Left lung (tissue), 14 donors: ENCODE measurements at regions of chr3 and their contacts with region 1.

Region 1: GRCh38 chr3:183385698-183386613 is 42.5 kb downstream of the MCF2L2 start:
- DNase-seq: peak in 2 of 4 donors; percentile 48 to 66
- ATAC-seq: peak; percentile 89
- H3K4me3 ChIP-seq: no peak overlapping the region
- H3K27ac ChIP-seq: no peak overlapping the region
- H3K4me1 ChIP-seq: peaks cover 0 to 14% of the 10 kb centered on the region in 2 donors
- H3K27me3 ChIP-seq: no peaks in the 10 kb centered on the region
- CTCF ChIP-seq: peak; percentile 56 to 77

Region 2: DNA sequence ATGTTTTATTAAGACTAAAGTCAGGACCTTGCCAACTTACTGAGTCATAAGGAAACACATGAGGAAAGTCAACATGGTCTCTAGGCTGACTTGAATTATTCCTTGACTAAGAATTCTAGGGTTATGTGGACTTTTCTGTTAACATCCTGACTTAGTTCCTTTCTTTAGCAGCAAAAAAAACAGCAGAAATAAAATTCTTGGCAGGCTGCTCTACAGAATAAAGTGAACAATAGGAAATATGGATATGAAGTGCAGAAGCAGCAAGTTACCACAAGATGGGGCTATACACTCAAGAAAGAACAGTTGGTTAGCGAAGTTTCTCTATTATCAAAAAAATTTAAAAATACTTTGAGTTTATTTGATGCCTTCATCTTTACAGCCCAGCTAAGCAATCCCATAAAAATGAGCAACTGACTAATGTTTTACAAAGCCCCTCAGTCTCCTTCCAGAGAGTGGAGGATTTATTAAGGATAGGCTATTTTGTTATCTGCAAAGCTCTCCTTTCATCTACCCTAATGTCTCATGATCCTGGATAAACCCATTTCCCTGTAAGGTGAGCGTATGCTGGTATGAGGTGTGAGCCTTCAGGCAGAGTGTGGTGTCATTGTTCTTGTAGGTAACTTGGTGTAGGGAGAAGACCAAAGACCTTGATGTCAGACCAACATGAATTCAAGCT is 263.6 kb before region 1 on chr3:
- intact Hi-C with region 1: loop called in 1 of 2 experiments (anchors 2 kb)
- DNase-seq: peak in 2 of 4 donors; percentile 51 to 69
- ATAC-seq: peak; percentile 82
- H3K4me3 ChIP-seq: no peak overlapping the region
- H3K27ac ChIP-seq: no peak overlapping the region
- H3K4me1 ChIP-seq: peaks cover 0 to 11% of the 10 kb centered on the region in 2 donors
- H3K27me3 ChIP-seq: peaks cover 0 to 12% of the 10 kb centered on the region in 2 donors
- CTCF ChIP-seq: peak; percentile 76 to 83

Region 3: DNA sequence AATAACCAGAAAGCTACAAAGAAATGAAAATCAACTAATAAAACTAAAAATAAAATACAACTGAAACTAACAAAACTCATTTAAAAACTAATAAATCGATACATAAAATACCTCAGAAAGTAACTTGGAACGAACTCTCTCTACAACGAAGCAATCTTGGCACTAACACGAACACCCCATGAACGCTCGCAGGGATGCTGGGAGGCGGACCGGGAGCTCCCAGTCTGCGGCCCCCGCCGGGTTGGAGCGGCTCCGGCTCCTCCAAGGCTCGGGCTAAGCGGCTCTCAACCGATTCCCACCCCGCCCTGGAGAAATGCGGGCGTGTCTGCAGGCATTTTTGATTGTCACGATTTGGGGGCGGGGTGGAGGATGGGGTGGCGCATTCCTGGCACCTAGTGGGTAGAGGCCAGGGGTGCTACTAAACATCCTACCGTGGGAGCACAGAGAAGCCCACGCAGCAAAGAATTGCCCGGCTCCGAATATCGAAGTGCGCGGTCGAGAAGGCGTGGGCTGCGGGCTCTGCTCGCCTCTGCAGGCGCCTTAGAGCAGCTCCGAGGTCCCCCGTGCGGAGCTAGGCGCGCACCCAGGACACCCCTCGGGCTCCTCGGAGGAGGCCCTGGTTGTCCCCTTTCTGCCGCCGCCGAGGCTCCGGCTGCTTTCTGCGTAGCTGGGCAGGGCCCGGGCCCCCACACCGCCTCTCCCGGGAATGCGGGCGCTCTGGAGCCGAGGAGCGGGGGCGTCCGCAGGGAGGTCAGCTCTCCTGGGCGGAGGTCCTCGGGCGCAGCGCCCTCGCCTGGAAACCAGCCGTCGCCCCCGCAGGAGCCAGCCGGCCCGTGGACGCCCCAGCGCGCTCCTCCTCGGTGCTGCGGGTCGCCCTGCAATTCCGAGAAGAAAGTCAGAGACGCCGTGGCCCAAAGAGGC is 207.1 kb before region 1 on chr3:
- intact Hi-C with region 1: loop called (anchors 1 to 10 kb)
- DNase-seq: peak in 3 of 4 donors; percentile 58 to 90 (median 78)
- ATAC-seq: peak; percentile 87
- H3K4me3 ChIP-seq: peak overlapping the region; percentile 51
- H3K27ac ChIP-seq: peak overlapping the region in 1 of 2 donors; percentile 45
- H3K4me1 ChIP-seq: peaks cover 0 to 20% of the 10 kb centered on the region in 2 donors
- H3K27me3 ChIP-seq: peaks cover 8 to 66% of the 10 kb centered on the region in 2 donors
- CTCF ChIP-seq: peak in 1 of 2 donors; percentile 7

Region 4: GRCh38 chr3:183188895-183189462 is 197.0 kb before region 1 on chr3:
- intact Hi-C with region 1: loop called (anchors 1 to 10 kb)
- DNase-seq: peak in 1 of 4 donors; percentile 33
- ATAC-seq: peak; percentile 51
- H3K4me3 ChIP-seq: no peak overlapping the region
- H3K27ac ChIP-seq: no peak overlapping the region
- H3K4me1 ChIP-seq: peaks cover 7 to 18% of the 10 kb centered on the region in 2 donors
- H3K27me3 ChIP-seq: no peaks in the 10 kb centered on the region
- CTCF ChIP-seq: peak in 1 of 2 donors; percentile 30

Region 5: DNA sequence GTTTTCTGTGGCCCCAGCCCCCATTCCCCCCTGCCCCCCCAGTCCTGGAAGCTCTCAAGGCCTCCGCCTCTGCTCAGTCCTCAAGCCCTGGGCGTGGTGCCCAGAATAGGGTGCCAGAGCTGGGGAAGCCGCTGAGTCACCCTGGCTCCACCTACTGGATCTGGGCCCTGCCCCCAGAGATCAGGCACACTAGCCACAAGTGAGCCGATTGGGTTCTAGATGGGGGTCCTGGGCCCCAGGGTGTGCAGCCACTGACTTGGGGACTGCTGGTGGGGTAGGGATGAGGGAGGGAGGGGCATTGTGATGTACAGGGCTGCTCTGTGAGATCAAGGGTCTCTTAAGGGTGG is 934.1 kb after region 1 on chr3:
- intact Hi-C with region 1: no loop called
- DNase-seq: peak; percentile 58 to 97 (median 94)
- ATAC-seq: peak; percentile 90
- H3K4me3 ChIP-seq: peak overlapping the region in 1 of 2 donors; percentile 30
- H3K27ac ChIP-seq: peak overlapping the region; percentile 88 to 89
- H3K4me1 ChIP-seq: peaks cover 36 to 78% of the 10 kb centered on the region in 2 donors
- H3K27me3 ChIP-seq: no peaks in the 10 kb centered on the region
- CTCF ChIP-seq: no peak